HAP-1 (cell line): ENCODE measurements at regions of chr16 and their contacts with region 1.

Region 1: DNA sequence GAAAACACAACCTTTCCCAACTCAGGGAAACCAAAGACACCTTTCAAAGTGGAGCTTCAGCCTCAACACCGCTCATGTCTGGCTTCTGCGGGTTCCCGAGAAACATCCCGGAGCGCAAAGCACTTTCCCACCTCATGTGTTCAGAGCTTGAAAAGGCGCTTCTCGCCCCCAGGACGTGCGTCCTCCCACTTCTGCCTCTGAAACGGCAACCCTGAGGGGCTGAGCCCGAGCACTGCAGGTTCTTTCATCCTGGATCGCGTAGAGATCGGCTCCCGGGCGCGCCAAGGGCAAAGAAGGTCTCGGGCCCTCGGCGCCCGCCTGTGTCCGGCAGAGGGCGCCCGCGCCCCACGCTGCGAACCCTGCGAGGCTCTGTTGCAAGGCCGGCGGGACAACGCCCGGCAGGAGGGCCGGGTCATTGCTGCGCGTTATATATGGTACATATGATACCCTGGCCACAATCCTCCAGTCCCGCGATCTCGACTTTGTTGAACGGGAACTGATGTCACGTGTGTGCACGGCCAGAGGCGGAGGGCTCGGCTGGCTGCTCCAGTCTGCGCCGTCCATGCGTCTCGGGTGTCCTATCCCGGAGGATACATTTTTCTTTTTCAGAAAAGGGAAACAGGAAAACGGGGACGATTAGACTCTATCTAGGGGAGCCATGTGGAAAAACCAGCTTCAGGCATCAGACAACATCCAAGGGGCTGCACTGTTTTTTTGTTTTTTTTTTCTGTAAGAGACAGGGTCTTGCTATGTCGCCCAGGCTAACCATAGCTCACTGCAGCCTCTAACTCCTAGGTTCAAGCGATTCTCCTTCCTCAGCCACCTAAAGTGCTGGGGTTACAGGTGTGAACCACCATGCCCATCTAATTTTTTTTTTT is 19.1 kb downstream of the COQ7 start:
- DNase-seq: peak; percentile 96
- H3K4me3 ChIP-seq: peak overlapping the region; percentile 32
- H3K4me1 ChIP-seq: peaks cover 5% of the 10 kb centered on the region
- H3K27me3 ChIP-seq: no peaks in the 10 kb centered on the region

Region 2: DNA sequence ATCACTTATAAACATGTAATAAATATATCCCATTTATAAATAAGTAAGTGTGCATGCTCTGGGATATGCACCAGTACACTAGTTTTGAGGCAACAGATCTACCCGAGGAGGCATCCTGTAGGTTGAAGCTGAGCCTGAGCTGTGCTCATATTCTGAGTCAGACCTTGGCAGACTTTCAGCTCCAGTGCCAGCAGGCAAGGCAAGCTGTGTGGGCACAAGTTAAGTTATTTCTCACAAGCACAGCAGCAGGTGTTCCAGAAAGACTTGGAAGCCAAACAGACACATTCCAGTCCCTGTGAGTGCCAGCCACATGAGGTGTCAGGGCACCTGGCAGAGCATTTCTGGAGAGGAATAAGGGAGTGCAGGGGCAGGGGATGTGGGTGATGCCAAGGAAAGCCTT is 197.6 kb after region 1 on chr16:
- in situ Hi-C with region 1: no loop called
- DNase-seq: no peak
- H3K4me3 ChIP-seq: no peak overlapping the region
- H3K4me1 ChIP-seq: peaks cover 9% of the 10 kb centered on the region
- H3K27me3 ChIP-seq: no peaks in the 10 kb centered on the region

Region 3: DNA sequence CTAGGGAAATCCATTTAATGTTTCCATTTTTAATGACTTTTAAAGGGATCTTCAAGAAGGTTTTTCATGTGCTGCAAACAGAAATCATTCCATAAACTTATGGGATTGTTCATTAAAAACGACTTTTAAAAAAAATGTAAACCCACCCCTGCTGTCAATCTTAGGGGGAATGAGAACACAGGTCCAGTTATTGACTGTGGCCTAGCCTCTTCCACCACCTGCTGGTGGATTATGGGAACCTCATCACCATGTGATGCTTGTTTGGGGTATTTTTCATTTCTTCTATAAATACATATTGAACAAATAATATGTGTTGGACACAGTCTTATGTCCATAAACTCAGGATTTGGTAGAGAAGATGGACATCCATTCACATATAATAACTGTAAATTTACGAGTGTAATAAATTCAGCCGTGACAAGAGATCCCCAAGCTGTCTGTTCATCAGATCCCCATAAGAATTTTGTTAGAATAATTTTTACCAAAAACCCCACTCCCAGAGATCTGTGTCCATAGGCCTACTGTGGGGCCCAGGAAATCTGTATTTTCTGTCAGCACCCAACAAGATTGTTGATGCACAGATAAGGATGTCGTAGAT is 289.1 kb after region 1 on chr16:
- in situ Hi-C with region 1: loop called (anchors 5 kb)
- DNase-seq: peak; percentile 59 to 64
- H3K4me3 ChIP-seq: no peak overlapping the region
- H3K4me1 ChIP-seq: no peaks in the 10 kb centered on the region
- H3K27me3 ChIP-seq: no peaks in the 10 kb centered on the region

Region 4: GRCh38 chr16:19521471-19522396 is 435.2 kb after region 1 on chr16 and contains the start of gene GDE1:
- in situ Hi-C with region 1: loop called (anchors 10 kb)
- DNase-seq: peak; percentile 92 to 97
- H3K4me3 ChIP-seq: peak within 1 kb of the TSS; percentile 84
- H3K4me1 ChIP-seq: peaks cover 48% of the 10 kb centered on the region
- H3K27me3 ChIP-seq: no peaks in the 10 kb centered on the region